CD4-positive, alpha-beta T cell (primary cell): ENCODE measurements at regions of chr2 and their contacts with region 1.

Region 1: DNA sequence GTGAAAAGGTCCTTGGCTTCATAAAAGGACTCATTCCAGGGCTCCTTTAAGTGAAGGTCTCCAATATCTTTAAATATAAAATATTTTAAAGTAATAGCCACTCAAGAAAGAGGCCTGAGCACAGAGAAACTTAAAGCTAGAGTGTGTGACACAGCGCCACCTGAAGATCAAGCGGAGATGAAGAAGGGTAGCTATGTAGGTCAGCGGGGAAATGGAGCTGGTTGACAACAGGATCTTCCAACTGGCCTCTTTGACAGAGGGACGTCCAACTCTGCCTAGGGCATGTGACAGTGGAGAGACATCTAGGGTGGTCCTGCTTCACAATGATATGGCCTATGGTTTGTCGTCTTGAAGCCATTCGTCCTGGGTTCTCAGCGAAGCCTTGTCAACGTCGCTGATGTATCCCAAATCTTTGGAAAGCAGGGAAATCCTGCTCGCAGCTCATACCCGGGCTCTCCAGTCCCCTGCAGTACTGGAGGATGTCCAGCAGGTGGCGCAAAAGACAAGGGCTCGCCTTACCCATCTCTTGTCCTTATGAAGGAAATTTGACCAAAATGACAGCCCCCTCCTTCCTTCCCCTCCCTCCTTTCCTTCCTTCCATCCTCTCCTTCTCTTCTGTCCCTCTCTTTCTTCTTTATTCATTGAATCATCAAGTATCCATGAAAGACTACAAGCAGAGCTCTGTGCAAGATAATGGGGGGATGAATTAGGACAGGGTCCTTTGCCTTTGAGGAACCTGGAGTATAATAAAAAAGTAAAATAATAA is 59.6 kb downstream of the LONRF2 start:
- DNase-seq: peak; percentile 19 to 70 (median 44)
- ATAC-seq: peak; percentile 62
- H3K4me3 ChIP-seq: no peak overlapping the region
- H3K4me3 Mint-ChIP-seq: no peak overlapping the region
- H3K27ac ChIP-seq: no peak overlapping the region
- H3K27ac Mint-ChIP-seq: no peak overlapping the region
- H3K4me1 ChIP-seq: no peaks in the 10 kb centered on the region
- H3K4me1 Mint-ChIP-seq: no peaks in the 10 kb centered on the region
- H3K27me3 ChIP-seq: no peaks in the 10 kb centered on the region
- H3K27me3 Mint-ChIP-seq: no peaks in the 10 kb centered on the region
- CTCF ChIP-seq: peak; percentile 89

Region 2: GRCh38 chr2:100178051-100178788 is 84.5 kb before region 1 on chr2:
- CTCF ChIA-PET with region 1: no interaction called
- POLR2A ChIA-PET with region 1: no interaction called
- intact Hi-C with region 1: no loop called
- DNase-seq: peak in 3 of 14 experiments; percentile 25 to 54 (median 49)
- ATAC-seq: no peak
- H3K4me3 ChIP-seq: no peak overlapping the region
- H3K4me3 Mint-ChIP-seq: no peak overlapping the region
- H3K27ac ChIP-seq: no peak overlapping the region
- H3K27ac Mint-ChIP-seq: no peak overlapping the region
- H3K4me1 ChIP-seq: no peaks in the 10 kb centered on the region
- H3K4me1 Mint-ChIP-seq: no peaks in the 10 kb centered on the region
- H3K27me3 ChIP-seq: no peaks in the 10 kb centered on the region
- H3K27me3 Mint-ChIP-seq: no peaks in the 10 kb centered on the region
- CTCF ChIP-seq: no peak

Region 3: DNA sequence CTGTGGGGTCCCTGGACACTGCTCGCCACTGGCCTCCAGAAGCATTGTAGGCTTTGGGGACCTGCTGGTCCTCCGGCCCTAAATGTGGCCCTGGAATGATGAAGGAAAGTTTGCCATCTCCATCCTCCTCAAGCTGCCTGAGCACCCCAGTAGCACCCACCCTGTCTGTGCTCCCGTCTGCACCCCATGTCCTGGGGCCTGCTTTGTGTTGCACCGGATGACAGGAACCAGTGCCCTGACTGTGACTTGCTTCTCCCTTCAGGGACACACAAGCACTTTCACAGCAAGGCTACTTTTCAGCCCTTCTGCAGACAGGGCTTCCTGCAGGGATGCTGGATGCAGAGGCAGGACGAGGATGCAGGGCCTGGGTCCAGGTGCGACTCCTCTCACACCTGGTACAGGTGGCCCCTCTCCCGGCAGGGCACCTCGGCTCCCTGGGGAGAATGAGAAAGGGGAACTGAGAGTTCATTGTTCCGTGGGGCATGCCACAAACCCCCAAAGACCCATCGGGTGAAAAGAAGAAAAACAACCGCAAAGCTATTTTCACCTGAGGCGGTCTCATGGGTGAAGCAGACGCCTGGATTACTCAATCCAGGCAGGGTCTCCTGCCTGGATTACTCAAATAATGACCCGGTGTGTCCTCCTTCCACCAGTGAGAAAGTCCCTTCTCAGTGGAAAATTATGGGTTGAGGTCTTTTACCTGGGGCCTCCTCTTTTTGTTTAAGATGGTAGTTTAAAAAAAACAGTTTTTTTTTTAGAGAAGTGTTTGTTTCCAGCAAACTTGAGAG is 15.3 kb before region 1 on chr2:
- CTCF ChIA-PET with region 1: no interaction called
- POLR2A ChIA-PET with region 1: no interaction called
- intact Hi-C with region 1: no loop called
- DNase-seq: no peak
- ATAC-seq: no peak
- H3K4me3 ChIP-seq: no peak overlapping the region
- H3K4me3 Mint-ChIP-seq: no peak overlapping the region
- H3K27ac ChIP-seq: no peak overlapping the region
- H3K27ac Mint-ChIP-seq: no peak overlapping the region
- H3K4me1 ChIP-seq: no peaks in the 10 kb centered on the region
- H3K4me1 Mint-ChIP-seq: no peaks in the 10 kb centered on the region
- H3K27me3 ChIP-seq: peaks cover 0 to 3% of the 10 kb centered on the region in 2 experiments
- H3K27me3 Mint-ChIP-seq: peaks cover 10% of the 10 kb centered on the region
- CTCF ChIP-seq: no peak

Region 4: GRCh38 chr2:100365434-100365833 is 102.7 kb after region 1 on chr2:
- CTCF ChIA-PET with region 1: no interaction called
- POLR2A ChIA-PET with region 1: no interaction called
- intact Hi-C with region 1: no loop called
- DNase-seq: no peak
- ATAC-seq: no peak
- H3K4me3 ChIP-seq: no peak overlapping the region
- H3K4me3 Mint-ChIP-seq: no peak overlapping the region
- H3K27ac ChIP-seq: no peak overlapping the region
- H3K27ac Mint-ChIP-seq: no peak overlapping the region
- H3K4me1 ChIP-seq: no peaks in the 10 kb centered on the region
- H3K4me1 Mint-ChIP-seq: no peaks in the 10 kb centered on the region
- H3K27me3 ChIP-seq: peaks cover 0 to 6% of the 10 kb centered on the region in 2 experiments
- H3K27me3 Mint-ChIP-seq: peaks cover 12% of the 10 kb centered on the region
- CTCF ChIP-seq: no peak

Region 5: DNA sequence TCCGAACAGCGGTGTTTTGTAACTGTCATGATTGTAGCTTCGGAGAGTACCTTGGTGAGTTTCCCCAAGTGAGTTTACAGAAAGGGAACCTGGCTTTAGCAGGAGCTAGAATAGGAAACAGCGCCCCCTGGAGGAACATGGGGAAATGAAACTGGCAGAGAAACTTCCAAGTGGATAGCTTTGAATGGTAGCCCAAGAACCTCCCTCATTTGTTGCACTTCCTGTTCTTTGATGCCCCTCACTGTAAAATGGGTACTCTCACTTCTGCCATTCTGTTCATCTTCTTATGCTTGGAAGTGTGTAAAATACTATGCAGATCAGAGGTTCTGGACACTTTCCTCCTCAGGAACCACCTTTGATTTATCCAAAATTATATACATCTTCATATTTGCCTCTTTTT is 118.5 kb after region 1 on chr2:
- CTCF ChIA-PET with region 1: interaction called, 21 read pairs
- POLR2A ChIA-PET with region 1: no interaction called
- intact Hi-C with region 1: loop called (anchors 1 kb)
- DNase-seq: peak; percentile 39 to 77 (median 57)
- ATAC-seq: no peak
- H3K4me3 ChIP-seq: no peak overlapping the region
- H3K4me3 Mint-ChIP-seq: no peak overlapping the region
- H3K27ac ChIP-seq: no peak overlapping the region
- H3K27ac Mint-ChIP-seq: no peak overlapping the region
- H3K4me1 ChIP-seq: no peaks in the 10 kb centered on the region
- H3K4me1 Mint-ChIP-seq: no peaks in the 10 kb centered on the region
- H3K27me3 ChIP-seq: no peaks in the 10 kb centered on the region
- H3K27me3 Mint-ChIP-seq: no peaks in the 10 kb centered on the region
- CTCF ChIP-seq: peak; percentile 90

Region 6: GRCh38 chr2:100675855-100676254 is 413.1 kb after region 1 on chr2:
- CTCF ChIA-PET with region 1: no interaction called
- POLR2A ChIA-PET with region 1: no interaction called
- intact Hi-C with region 1: no loop called
- DNase-seq: no peak
- ATAC-seq: no peak
- H3K4me3 ChIP-seq: no peak overlapping the region
- H3K4me3 Mint-ChIP-seq: no peak overlapping the region
- H3K27ac ChIP-seq: no peak overlapping the region
- H3K27ac Mint-ChIP-seq: no peak overlapping the region
- H3K4me1 ChIP-seq: peaks cover 10% of the 10 kb centered on the region
- H3K4me1 Mint-ChIP-seq: peaks cover 12% of the 10 kb centered on the region
- H3K27me3 ChIP-seq: no peaks in the 10 kb centered on the region
- H3K27me3 Mint-ChIP-seq: no peaks in the 10 kb centered on the region
- CTCF ChIP-seq: no peak